Gastrocnemius medialis (tissue), 4 donors: ENCODE measurements at regions of chr12 and their contacts with region 1.

Region 1: DNA sequence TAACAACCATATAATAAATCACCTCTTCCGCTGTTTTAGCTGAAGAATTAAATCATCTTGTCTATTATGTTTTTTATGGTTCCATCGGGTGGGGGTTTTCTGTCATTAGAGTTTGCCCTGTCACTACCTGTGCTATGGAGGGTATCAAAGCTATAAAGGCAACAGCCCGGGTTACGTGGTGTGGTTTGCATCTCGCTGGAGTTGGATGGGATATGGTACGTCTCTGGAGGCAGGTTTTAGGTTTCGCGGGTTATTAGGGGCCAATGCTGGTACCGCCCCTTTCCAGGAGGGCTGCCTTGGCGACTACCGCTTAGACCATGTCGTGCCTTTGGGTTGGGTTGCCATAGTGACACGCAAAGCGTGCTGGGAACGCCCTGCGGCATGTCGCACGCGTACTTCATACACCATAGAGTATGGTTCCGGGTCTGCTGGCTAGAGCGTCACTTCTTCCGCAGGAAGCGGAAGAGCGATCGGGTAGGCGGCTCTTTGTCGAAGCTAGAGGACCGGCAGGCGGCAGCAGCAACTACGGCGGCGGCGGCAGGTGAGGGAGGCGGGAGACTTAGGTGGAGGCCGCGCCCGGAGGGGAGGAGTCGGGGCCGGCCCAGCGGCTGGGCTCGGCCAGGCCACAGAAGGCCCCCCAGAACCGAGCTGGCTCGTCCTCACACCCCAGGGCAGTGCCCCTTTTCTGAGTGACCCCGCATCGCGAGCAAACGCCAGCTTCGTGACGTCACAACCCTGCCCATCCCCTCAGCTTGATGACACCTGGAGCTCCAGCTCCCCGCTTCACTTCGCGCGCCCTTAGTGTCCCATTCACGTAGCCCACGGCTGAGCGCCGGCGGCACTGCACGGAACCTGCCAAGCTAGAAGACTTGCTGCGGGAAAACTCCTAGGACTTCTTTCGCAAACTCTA is at the start of gene ZC3H10:
- DNase-seq: peak; percentile 98 to 99
- ATAC-seq: peak; percentile 76
- H3K4me3 ChIP-seq: peak within 1 kb of the TSS; percentile 82 to 94 (median 88)
- H3K27ac ChIP-seq: peak within 1 kb of the TSS; percentile 93 to 99 (median 98)
- H3K4me1 ChIP-seq: peaks cover 44 to 49% of the 10 kb centered on the region in 2 donors
- H3K27me3 ChIP-seq: no peaks in the 10 kb centered on the region
- CTCF ChIP-seq: peak; percentile 29 to 76 (median 58)
- POLR2A ChIP-seq: peak; percentile 91 to 96
- total RNA-seq, gene ZC3H10: 3.1 to 9.1 (median 3.7) TPM

Region 2: DNA sequence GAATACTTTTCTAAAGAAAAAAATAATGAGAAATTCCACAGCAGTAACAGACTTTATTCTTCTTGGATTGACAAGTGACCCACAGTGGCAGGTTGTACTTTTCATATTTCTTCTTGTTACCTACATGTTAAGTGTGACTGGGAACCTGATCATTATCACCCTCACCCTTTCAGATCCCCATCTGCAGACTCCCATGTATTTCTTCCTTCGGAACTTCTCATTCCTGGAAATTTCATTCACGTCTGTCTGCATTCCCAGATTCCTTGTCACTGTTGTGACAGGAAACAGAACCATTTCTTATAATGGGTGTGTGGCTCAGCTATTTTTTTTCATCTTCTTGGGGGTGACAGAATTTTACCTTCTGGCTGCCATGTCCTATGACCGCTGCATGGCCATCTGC is 752.9 kb before region 1 on chr12:
- in situ Hi-C with region 1: no loop called
- intact Hi-C with region 1: no loop called
- DNase-seq: no peak
- ATAC-seq: no peak
- H3K4me3 ChIP-seq: no peak overlapping the region
- H3K27ac ChIP-seq: no peak overlapping the region
- H3K4me1 ChIP-seq: no peaks in the 10 kb centered on the region
- H3K27me3 ChIP-seq: no peaks in the 10 kb centered on the region
- CTCF ChIP-seq: no peak
- POLR2A ChIP-seq: no peak

Region 3: DNA sequence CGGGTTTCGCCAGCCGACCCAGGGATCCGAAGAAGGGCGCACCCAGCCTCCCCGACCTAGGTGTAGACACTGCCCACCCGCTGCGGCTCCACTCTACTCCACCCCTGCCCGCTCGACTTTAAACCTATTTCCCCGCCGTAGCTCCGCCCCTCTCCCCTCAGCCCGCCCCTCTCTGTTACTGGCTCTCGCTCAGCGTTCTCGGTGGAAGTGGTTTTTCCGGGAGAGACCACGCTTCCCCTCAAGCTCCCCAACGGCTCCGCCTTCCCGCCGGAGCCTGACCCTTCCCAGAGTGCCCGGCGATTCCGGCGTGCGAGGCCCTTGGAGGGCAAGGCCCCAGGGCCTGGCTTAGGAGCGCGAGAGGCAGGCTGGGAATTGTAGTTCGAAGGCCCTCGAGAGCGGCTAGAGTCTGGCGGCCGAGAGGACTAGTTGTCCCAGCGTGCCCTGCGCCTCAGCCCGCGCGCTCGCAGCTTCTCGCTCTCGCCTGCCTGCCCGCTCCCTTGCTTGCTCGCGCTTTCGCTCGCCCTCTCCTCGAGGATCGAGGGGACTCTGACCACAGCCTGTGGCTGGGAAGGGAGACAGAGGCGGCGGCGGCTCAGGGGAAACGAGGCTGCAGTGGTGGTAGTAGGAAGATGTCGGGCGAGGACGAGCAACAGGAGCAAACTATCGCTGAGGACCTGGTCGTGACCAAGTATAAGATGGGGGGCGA is 13.8 kb before region 1 on chr12 and contains the start of gene PA2G4:
- in situ Hi-C with region 1: no loop called
- intact Hi-C with region 1: loop called (anchors 1 kb)
- DNase-seq: peak; percentile 98
- ATAC-seq: peak; percentile 95 to 96
- H3K4me3 ChIP-seq: peak within 1 kb of the TSS; percentile 77 to 98 (median 84)
- H3K27ac ChIP-seq: peak within 1 kb of the TSS; percentile 85 to 93 (median 92)
- H3K4me1 ChIP-seq: peaks cover 20 to 26% of the 10 kb centered on the region in 2 donors
- H3K27me3 ChIP-seq: no peaks in the 10 kb centered on the region
- CTCF ChIP-seq: no peak
- POLR2A ChIP-seq: peak; percentile 85 to 96
- total RNA-seq, gene PA2G4: 109 to 204 (median 127) TPM

Region 4: GRCh38 chr12:56189176-56189917 is 71.3 kb after region 1 on chr12 and contains the start of gene SMARCC2:
- in situ Hi-C with region 1: loop called in 2 of 4 experiments (anchors 10 kb)
- intact Hi-C with region 1: loop called (anchors 1 kb)
- DNase-seq: peak; percentile 77 to 88
- ATAC-seq: peak; percentile 90
- H3K4me3 ChIP-seq: peak within 1 kb of the TSS; percentile 76 to 90 (median 82)
- H3K27ac ChIP-seq: peak within 1 kb of the TSS; percentile 89 to 94 (median 94)
- H3K4me1 ChIP-seq: peaks cover 16 to 28% of the 10 kb centered on the region in 2 donors
- H3K27me3 ChIP-seq: no peaks in the 10 kb centered on the region
- CTCF ChIP-seq: peak; percentile 74 to 88 (median 84)
- POLR2A ChIP-seq: peak; percentile 20 to 41
- total RNA-seq, gene SMARCC2: 34.1 to 56.9 (median 49.4) TPM

Region 5: GRCh38 chr12:56315622-56316473 is 197.8 kb after region 1 on chr12 and contains the start of gene CNPY2:
- in situ Hi-C with region 1: no loop called
- intact Hi-C with region 1: loop called (anchors 5 kb)
- DNase-seq: peak; percentile 93 to 96
- ATAC-seq: peak; percentile 95 to 98
- H3K4me3 ChIP-seq: peak within 1 kb of the TSS; percentile 91 to 99 (median 98)
- H3K27ac ChIP-seq: peak within 1 kb of the TSS; percentile 96 to 99 (median 96)
- H3K4me1 ChIP-seq: peaks cover 19 to 20% of the 10 kb centered on the region in 2 donors
- H3K27me3 ChIP-seq: no peaks in the 10 kb centered on the region
- CTCF ChIP-seq: peak in 2 of 5 experiments; percentile 28 to 29
- POLR2A ChIP-seq: peak; percentile 84 to 88
- total RNA-seq, gene CNPY2: 21.7 to 59.1 (median 28.4) TPM

Region 6: DNA sequence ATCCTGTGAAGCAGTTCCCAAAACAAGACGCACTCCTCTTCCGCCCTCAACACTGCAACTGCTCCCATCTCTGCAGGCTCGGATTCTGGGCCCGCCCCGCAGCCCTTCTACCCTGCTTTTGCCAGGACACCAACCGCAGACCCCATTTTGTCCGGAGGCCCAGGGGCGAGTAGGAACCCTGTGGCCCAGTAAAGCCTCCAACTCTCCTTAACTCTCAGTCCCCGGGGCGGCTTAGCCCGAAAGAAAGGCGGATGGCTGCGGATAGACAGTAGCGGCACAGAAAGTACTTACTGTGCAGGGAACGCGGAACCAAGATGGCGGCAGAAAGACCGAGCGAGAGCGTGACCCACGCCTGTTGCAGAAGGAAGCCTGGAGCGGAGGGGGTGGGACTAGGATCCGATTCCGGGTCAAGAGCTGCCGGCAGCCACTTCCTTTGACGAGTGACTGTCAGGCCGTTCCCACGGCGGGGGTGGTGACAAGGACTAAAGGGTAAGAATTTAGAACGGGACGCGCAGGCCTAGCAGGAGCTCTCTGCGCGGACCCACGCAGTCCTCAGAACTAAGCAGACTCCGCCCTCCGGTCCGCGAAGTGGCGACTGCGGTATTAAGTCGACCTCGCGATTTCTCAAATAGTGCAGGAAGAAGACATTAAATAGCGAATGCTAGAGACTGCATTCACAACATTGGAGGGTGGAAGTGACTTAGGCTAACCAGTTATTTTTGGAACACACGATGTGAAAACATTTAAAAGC is 607.1 kb after region 1 on chr12 and contains the start of gene NACA:
- in situ Hi-C with region 1: no loop called
- intact Hi-C with region 1: loop called (anchors 1 kb)
- DNase-seq: peak; percentile 99
- ATAC-seq: peak; percentile 85 to 87
- H3K4me3 ChIP-seq: peak within 1 kb of the TSS; percentile 78 to 99 (median 84)
- H3K27ac ChIP-seq: peak within 1 kb of the TSS; percentile 95 to 98 (median 96)
- H3K4me1 ChIP-seq: peaks cover 33 to 43% of the 10 kb centered on the region in 2 donors
- H3K27me3 ChIP-seq: no peaks in the 10 kb centered on the region
- CTCF ChIP-seq: no peak
- POLR2A ChIP-seq: peak; percentile 97 to 98
- total RNA-seq, gene NACA: 225 to 438 (median 398) TPM